HCT116 (cell line): ENCODE measurements at regions of chr4 and their contacts with region 1.

Region 1: DNA sequence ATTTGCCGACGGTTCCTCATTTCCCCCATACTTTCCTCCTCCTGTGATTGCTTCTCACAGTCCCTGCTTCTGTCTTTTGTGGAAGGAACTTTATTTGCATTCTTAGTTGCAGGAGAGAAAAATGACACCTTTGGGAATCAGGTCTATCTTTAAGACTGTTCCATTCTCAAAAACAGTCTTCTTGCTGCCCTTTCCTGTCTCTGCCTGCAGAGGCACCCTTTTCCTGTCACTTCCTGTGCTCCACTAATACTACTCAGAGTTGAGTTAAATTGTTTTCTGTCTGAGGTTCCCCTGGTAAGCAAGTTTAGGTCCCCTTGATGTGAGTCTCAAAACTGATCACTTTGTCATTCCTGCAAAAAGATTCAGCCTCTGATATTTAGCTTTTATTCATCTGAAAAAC is 208.8 kb upstream of the CLNK start:
- DNase-seq: no peak
- ATAC-seq: peak; percentile 80
- H3K4me3 ChIP-seq: no peak overlapping the region
- H3K27ac ChIP-seq: no peak overlapping the region
- H3K4me1 ChIP-seq: no peaks in the 10 kb centered on the region
- H3K27me3 ChIP-seq: no peaks in the 10 kb centered on the region
- CTCF ChIP-seq: peak; percentile 6 to 65 (median 62); a peak in 4 of 6 replicates
- POLR2A ChIP-seq: no peak
- RAD21 ChIP-seq: peak; percentile 56

Region 2: DNA sequence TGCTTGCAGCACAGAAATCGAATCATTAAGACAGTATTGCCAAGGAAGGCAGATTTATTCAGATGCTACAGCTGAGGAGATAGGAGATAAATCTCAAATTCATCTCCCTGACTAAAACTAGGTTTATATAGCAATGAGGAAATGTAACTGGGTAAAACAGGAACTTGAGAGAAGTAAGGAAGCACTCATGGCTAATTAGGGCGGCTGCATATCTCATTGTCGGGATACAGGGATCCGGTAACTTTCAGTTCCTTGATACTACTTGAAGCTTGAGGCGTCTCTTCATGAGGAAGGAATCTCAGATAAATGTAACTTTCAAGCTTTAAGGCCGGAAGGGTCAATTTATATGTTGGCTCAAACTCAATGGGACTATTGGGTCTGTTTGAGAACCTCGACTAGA is 647.6 kb before region 1 on chr4:
- CTCF ChIA-PET with region 1: no interaction called
- POLR2A ChIA-PET with region 1: no interaction called
- RAD21 ChIA-PET with region 1: no interaction called
- intact Hi-C with region 1: no loop called
- DNase-seq: no peak
- ATAC-seq: no peak
- H3K4me3 ChIP-seq: no peak overlapping the region
- H3K27ac ChIP-seq: no peak overlapping the region
- H3K4me1 ChIP-seq: no peaks in the 10 kb centered on the region
- H3K27me3 ChIP-seq: peaks cover 78% of the 10 kb centered on the region
- CTCF ChIP-seq: no peak
- POLR2A ChIP-seq: no peak
- RAD21 ChIP-seq: no peak

Region 3: DNA sequence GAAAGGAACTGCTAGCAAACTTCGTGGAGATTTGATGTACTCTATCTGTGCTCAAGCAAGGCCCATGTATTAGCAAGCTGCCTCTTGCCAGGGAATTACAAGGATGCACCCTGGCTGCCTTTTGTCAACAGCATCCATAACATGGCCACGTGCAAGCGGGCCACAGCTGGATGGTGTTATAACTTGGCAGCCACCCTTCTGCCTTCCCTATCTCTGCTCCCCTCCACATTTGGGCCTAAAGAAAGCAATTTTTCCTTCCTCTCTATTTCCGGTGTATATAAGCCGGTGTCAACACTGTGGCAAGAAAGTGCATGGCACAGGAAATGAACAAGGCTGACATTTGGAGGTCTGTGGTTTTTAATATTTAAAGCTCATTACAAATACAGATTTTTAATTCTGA is 303.6 kb before region 1 on chr4:
- CTCF ChIA-PET with region 1: no interaction called
- POLR2A ChIA-PET with region 1: no interaction called
- RAD21 ChIA-PET with region 1: no interaction called
- intact Hi-C with region 1: loop called (anchors 10 kb)
- DNase-seq: no peak
- ATAC-seq: no peak
- H3K4me3 ChIP-seq: no peak overlapping the region
- H3K27ac ChIP-seq: no peak overlapping the region
- H3K4me1 ChIP-seq: peaks cover 0 to 7% of the 10 kb centered on the region in 2 experiments; a peak in 1 of 4 replicates
- H3K27me3 ChIP-seq: no peaks in the 10 kb centered on the region
- CTCF ChIP-seq: no peak
- POLR2A ChIP-seq: no peak
- RAD21 ChIP-seq: no peak

Region 4: GRCh38 chr4:10879411-10880110 is 13.8 kb before region 1 on chr4:
- CTCF ChIA-PET with region 1: interaction called, 10 read pairs
- POLR2A ChIA-PET with region 1: no interaction called
- RAD21 ChIA-PET with region 1: no interaction called
- intact Hi-C with region 1: no loop called
- DNase-seq: no peak
- ATAC-seq: no peak
- H3K4me3 ChIP-seq: no peak overlapping the region
- H3K27ac ChIP-seq: no peak overlapping the region
- H3K4me1 ChIP-seq: peaks cover 6 to 13% of the 10 kb centered on the region in 2 experiments; a peak in 3 of 4 replicates
- H3K27me3 ChIP-seq: no peaks in the 10 kb centered on the region
- CTCF ChIP-seq: no peak
- POLR2A ChIP-seq: no peak
- RAD21 ChIP-seq: no peak

Region 5: GRCh38 chr4:11397819-11398610 is 504.6 kb after region 1 on chr4:
- CTCF ChIA-PET with region 1: no interaction called
- POLR2A ChIA-PET with region 1: no interaction called
- RAD21 ChIA-PET with region 1: no interaction called
- intact Hi-C with region 1: loop called (anchors 10 kb)
- DNase-seq: no peak
- ATAC-seq: no peak
- H3K4me3 ChIP-seq: peak overlapping the region in 1 of 2 experiments; percentile 2; a peak in 1 of 4 replicates
- H3K27ac ChIP-seq: peak overlapping the region; percentile 23; the same call in 1 of the 2 replicates
- H3K4me1 ChIP-seq: peaks cover 9 to 47% of the 10 kb centered on the region in 2 experiments
- H3K27me3 ChIP-seq: no peaks in the 10 kb centered on the region
- CTCF ChIP-seq: no peak
- POLR2A ChIP-seq: no peak
- RAD21 ChIP-seq: no peak